ENCODE measurements at regions of chr20 and their contacts with region 1.

Region 1: DNA sequence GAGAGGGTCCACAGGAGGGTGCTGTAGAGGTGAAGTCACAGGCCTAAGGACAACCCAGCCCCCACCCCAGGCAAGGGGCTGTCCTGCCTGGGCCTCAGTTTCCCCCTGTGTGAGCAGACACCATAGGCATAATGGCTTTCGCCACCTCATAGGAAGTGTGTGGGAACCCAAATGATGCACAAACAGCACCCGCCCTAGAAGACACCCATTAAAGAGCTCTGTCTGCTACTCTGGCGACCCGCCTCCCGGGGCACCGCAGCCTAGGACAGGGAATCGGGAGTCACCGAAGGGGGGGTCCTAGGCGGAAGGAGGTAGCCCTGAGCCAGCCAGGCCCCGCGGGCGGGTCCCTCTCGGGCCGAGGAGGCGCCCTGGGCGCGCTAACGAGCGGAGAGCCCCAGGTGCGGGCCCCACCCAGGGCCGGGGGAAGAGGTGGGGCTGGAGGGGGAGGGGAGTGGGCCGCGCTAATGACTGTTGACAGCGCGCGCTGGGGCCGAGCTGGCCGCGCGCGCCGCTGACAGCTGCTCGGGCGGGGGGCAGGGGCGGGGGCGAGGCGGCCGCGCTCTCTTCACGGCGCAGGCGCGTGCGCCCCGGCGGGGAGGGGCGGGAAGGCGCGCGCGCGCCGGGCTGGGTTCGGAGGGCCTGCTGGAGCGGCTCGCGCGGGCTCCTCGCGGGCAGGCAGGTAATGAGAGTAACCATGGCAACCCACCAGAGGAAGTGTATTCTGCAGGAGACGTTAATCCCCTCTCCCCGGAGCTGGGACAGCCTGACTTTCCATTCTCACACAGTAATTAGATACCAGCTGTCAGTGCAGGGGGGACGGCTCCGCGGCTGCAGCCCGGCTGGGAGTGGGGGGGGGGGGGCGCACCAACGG is 48.9 kb downstream of the NOL4L start:
- DNase-seq: peak; percentile 65 to 90 (median 76)
- ATAC-seq: peak; percentile 55 to 64 (median 59)
- H3K4me3 ChIP-seq: peak overlapping the region; percentile 35 to 53
- H3K4me3 Mint-ChIP-seq: peak overlapping the region; percentile 74 to 81 (median 75)
- H3K27ac ChIP-seq: peak overlapping the region; percentile 93
- H3K27ac Mint-ChIP-seq: peak overlapping the region; percentile 96 to 97
- H3K4me1 ChIP-seq: peaks cover 65 to 89% of the 10 kb centered on the region in 2 experiments
- H3K4me1 Mint-ChIP-seq: peaks cover 86 to 91% (median 89%) of the 10 kb centered on the region in 3 donors
- H3K27me3 ChIP-seq: no peaks in the 10 kb centered on the region
- H3K27me3 Mint-ChIP-seq: no peaks in the 10 kb centered on the region

Region 2: DNA sequence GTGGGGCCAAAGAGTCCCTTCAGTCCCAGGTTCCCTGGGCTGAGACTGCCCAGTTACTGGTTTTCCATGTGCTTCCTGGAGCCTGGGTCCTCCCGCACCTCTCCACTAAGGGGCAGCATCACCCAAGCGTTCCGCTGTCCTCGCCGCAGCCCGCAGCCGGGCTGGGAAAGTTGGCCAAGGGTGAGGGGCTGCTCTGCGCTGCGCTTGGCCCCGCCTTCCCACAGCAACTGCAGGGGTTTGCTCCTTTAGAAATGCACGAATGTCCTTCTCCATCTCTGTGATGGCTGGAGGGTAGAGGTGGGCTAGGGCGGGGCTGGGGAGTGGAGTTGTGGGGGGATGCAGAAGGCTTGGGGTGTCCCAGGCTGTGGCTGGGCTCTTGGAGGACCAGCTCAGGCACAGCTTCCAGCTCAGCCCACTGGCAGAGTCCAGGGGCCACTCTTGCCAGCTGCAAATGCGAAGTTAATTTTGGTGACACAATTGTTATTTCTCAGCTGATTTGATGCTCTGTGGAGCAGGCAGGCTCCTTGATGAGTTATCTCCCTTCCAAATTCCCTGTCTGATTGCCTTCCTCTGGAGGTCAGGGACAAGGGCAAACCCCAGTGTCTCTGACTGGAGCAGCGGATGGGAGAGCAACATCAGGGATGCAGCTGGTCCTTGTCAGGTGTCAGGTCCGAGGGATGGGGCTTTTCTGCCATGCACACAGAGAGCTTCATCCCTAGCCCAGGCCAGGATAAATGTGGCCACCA is 14.2 kb before region 1 on chr20:
- CTCF ChIA-PET with region 1: interaction called, 10 to 31 read pairs
- POLR2A ChIA-PET with region 1: interaction called, 10 to 15 read pairs
- DNase-seq: peak in 32 of 35 experiments; percentile 40 to 84 (median 61)
- ATAC-seq: peak; percentile 70 to 86 (median 75)
- H3K4me3 ChIP-seq: no peak overlapping the region
- H3K4me3 Mint-ChIP-seq: peak overlapping the region in 1 of 3 donors; percentile 59
- H3K27ac ChIP-seq: peak overlapping the region; percentile 48
- H3K27ac Mint-ChIP-seq: peak overlapping the region; percentile 95
- H3K4me1 ChIP-seq: peaks cover 47 to 72% of the 10 kb centered on the region in 2 experiments
- H3K4me1 Mint-ChIP-seq: peaks cover 58 to 68% (median 61%) of the 10 kb centered on the region in 3 donors
- H3K27me3 ChIP-seq: no peaks in the 10 kb centered on the region
- H3K27me3 Mint-ChIP-seq: no peaks in the 10 kb centered on the region

Region 3: GRCh38 chr20:32580219-32580969 is 44.2 kb after region 1 on chr20:
- CTCF ChIA-PET with region 1: no interaction called
- POLR2A ChIA-PET with region 1: interaction called, 7 to 14 read pairs
- DNase-seq: no peak
- ATAC-seq: peak in 1 of 4 experiments; percentile 5
- H3K4me3 ChIP-seq: no peak overlapping the region
- H3K4me3 Mint-ChIP-seq: peak overlapping the region in 1 of 3 donors; percentile 79
- H3K27ac ChIP-seq: peak overlapping the region; percentile 44
- H3K27ac Mint-ChIP-seq: peak overlapping the region; percentile 81 to 91
- H3K4me1 ChIP-seq: peaks cover 20 to 71% of the 10 kb centered on the region in 2 experiments
- H3K4me1 Mint-ChIP-seq: peaks cover 18 to 43% (median 43%) of the 10 kb centered on the region in 3 donors
- H3K27me3 ChIP-seq: no peaks in the 10 kb centered on the region
- H3K27me3 Mint-ChIP-seq: no peaks in the 10 kb centered on the region

Region 4: DNA sequence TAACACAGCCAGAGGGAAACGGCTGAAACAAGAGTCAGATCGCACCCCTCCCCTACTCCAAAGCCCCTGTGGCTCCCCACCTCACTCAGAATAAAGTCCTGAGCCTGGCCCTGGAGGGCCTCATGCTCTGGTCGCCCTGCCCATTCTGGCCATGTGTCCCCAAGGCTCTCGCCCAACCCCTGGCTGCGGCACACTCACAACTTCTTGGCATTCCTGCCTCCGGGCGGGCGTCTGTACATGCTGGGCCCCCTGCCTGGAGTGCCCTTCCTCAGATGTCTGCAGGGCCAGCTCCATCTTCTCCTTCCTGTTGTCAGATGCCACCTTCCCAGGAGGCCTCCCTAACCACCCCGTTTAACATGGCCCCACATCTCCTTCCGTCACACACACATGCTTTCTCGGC is 66.1 kb after region 1 on chr20:
- CTCF ChIA-PET with region 1: no interaction called
- POLR2A ChIA-PET with region 1: interaction called in 1 of 2 experiments, 10 read pairs
- DNase-seq: no peak
- ATAC-seq: no peak
- H3K4me3 ChIP-seq: no peak overlapping the region
- H3K4me3 Mint-ChIP-seq: no peak overlapping the region
- H3K27ac ChIP-seq: no peak overlapping the region
- H3K27ac Mint-ChIP-seq: no peak overlapping the region
- H3K4me1 ChIP-seq: no peaks in the 10 kb centered on the region
- H3K4me1 Mint-ChIP-seq: peaks cover 0 to 6% (median 0%) of the 10 kb centered on the region in 3 donors
- H3K27me3 ChIP-seq: peaks cover 0 to 15% of the 10 kb centered on the region in 2 experiments
- H3K27me3 Mint-ChIP-seq: peaks cover 0 to 3% of the 10 kb centered on the region in 2 donors

Region 5: GRCh38 chr20:32652739-32653526 is 116.7 kb after region 1 on chr20:
- CTCF ChIA-PET with region 1: interaction called, 3 to 11 read pairs
- POLR2A ChIA-PET with region 1: no interaction called
- DNase-seq: peak; percentile 64 to 93 (median 84)
- ATAC-seq: peak; percentile 98 to 99 (median 98)
- H3K4me3 ChIP-seq: peak overlapping the region in 1 of 2 donors; percentile 12
- H3K4me3 Mint-ChIP-seq: peak overlapping the region; percentile 3 to 47 (median 18)
- H3K27ac ChIP-seq: no peak overlapping the region
- H3K27ac Mint-ChIP-seq: peak overlapping the region in 1 of 2 donors; percentile 67
- H3K4me1 ChIP-seq: peaks cover 0 to 10% of the 10 kb centered on the region in 2 experiments
- H3K4me1 Mint-ChIP-seq: peaks cover 6 to 13% (median 8%) of the 10 kb centered on the region in 3 donors
- H3K27me3 ChIP-seq: peaks cover 0 to 2% of the 10 kb centered on the region in 2 experiments
- H3K27me3 Mint-ChIP-seq: no peaks in the 10 kb centered on the region

Region 6: DNA sequence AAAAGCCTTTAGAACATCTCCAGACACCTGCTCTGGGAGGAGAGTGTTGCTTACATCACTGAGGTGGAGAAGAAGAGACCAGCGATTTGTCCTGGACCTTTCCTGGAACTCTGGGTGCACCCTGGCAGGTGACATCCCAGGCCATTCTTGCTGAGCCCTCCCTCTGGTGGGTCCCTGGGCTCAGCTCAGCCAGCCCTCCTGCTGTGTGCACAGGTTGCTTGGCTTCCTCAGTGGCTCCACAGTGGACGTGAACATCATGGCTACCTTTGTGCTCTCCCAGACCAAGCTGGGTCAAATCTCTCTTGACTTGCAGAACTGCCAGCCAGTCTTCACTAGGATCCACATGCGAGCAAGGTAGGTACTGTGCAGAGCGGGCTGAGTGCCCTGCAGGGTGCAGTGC is 611.9 kb after region 1 on chr20:
- CTCF ChIA-PET with region 1: no interaction called
- POLR2A ChIA-PET with region 1: no interaction called
- DNase-seq: no peak
- ATAC-seq: no peak
- H3K4me3 ChIP-seq: no peak overlapping the region
- H3K4me3 Mint-ChIP-seq: no peak overlapping the region
- H3K27ac ChIP-seq: no peak overlapping the region
- H3K27ac Mint-ChIP-seq: no peak overlapping the region
- H3K4me1 ChIP-seq: no peaks in the 10 kb centered on the region
- H3K4me1 Mint-ChIP-seq: no peaks in the 10 kb centered on the region
- H3K27me3 ChIP-seq: peaks cover 0 to 20% of the 10 kb centered on the region in 2 experiments
- H3K27me3 Mint-ChIP-seq: peaks cover 34 to 48% of the 10 kb centered on the region in 2 donors